IMR-90 (cell line): ENCODE measurements at regions of chr19 and their contacts with region 1.

Region 1: DNA sequence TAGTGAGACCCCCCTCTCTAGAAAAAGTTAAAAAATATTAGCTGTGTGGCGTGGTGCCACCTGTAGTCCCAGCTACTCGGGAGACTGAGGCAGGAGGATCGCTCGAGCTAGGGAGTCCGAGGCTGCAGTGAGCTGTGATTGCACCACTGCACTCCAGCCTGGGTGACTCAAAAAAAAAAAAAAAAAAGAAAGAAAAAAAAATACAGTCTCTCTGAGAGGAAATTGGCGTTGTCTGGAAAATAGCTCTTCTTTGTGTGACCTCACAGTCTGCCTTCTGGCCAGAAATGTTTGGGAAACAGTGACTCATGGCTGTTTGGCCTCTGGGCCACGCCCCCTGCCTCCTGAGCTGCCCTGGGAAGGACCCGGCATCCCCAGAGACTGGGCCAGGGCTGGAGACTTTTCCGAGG is 10.7 kb downstream of the MARCHF2 start:
- DNase-seq: peak; percentile 97
- ATAC-seq: peak; percentile 100
- H3K4me3 ChIP-seq: no peak overlapping the region
- H3K27ac ChIP-seq: peak overlapping the region; percentile 23; the same call in 1 of the 2 replicates
- H3K4me1 ChIP-seq: peaks cover 4% of the 10 kb centered on the region
- H3K27me3 ChIP-seq: no peaks in the 10 kb centered on the region
- CTCF ChIP-seq: no peak
- POLR2A ChIP-seq: no peak
- RAD21 ChIP-seq: no peak

Region 2: DNA sequence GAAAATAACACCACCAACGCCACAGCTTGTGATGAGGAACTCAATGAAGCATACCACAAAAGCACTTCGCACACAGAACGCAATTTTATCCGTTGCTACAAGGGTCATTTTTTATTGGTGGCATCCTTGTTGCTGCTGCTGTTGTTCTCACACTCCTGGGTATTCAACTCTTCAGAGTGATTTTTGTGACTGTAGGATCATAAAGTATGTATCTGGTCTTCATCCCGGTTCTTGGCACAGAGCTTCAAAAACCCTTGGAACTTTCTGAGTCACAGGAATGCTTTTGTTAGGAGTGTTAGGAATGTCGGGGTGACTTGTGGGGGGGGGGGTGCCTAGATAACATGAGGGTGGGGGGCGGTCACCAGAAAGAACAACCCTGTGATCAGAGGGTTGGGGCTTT is 1245.9 kb before region 1 on chr19:
- CTCF ChIA-PET with region 1: no interaction called
- POLR2A ChIA-PET with region 1: no interaction called
- dilution Hi-C with region 1: no loop called
- in situ Hi-C with region 1: no loop called
- intact Hi-C with region 1: no loop called
- DNase-seq: peak; percentile 50
- ATAC-seq: peak; percentile 29; the same call in 1 of the 2 replicates
- H3K4me3 ChIP-seq: no peak overlapping the region
- H3K27ac ChIP-seq: no peak overlapping the region
- H3K4me1 ChIP-seq: peaks cover 9% of the 10 kb centered on the region
- H3K27me3 ChIP-seq: no peaks in the 10 kb centered on the region
- CTCF ChIP-seq: no peak
- POLR2A ChIP-seq: no peak
- RAD21 ChIP-seq: no peak

Region 3: DNA sequence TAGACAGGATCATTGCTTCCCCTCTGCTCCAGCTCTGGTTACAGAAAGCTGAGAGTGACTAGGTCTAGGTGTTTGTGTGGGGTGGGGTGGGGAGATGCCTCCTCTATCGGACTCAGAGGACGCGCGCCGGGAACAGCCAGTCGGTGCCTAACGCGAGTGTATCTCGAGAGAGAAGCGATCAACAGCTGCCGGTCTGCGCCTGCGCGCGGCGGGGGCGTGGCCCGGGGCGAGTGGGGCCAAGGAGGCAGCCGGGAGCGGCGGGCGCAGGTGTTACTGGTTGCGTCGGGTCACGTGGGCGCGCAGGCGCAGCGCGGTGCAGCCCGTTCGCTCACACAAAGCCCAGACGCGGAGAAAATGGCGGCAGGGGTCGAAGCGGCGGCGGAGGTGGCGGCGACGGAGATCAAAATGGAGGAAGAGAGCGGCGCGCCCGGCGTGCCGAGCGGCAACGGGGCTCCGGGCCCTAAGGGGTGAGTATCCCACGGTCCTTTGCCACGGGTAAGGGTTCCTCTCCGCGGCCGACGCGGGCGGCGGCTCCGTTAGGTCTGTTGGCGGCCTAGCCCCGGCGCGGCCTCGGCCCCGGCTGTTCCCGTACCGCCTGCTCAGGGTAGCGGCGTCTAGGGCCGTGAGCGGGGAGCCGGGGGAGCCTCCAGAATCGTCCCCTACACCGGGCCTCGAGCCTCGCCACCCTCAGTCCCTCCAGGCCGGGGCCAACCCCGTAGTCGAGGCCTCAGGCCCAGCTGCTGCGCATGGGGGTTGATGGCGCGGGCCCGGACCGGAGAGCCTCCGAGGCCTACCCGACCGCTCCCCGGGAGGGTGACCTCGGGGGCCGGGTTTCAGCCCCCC is 21.0 kb after region 1 on chr19 and contains the start of gene HNRNPM:
- CTCF ChIA-PET with region 1: interaction called, 3 read pairs
- POLR2A ChIA-PET with region 1: no interaction called
- dilution Hi-C with region 1: no loop called
- in situ Hi-C with region 1: no loop called
- intact Hi-C with region 1: loop called (anchors 2 kb)
- DNase-seq: peak; percentile 95
- ATAC-seq: peak; percentile 95
- H3K4me3 ChIP-seq: peak within 1 kb of the TSS; percentile 83
- H3K27ac ChIP-seq: peak within 1 kb of the TSS; percentile 88
- H3K4me1 ChIP-seq: peaks cover 5% of the 10 kb centered on the region
- H3K27me3 ChIP-seq: no peaks in the 10 kb centered on the region
- CTCF ChIP-seq: no peak
- POLR2A ChIP-seq: peak; percentile 95
- RAD21 ChIP-seq: no peak
- total RNA-seq, gene HNRNPM: 75.6 and 90.5 TPM in 2 replicates

Region 4: GRCh38 chr19:8459520-8460259 is 35.9 kb after region 1 on chr19:
- CTCF ChIA-PET with region 1: no interaction called
- POLR2A ChIA-PET with region 1: interaction called, 10 read pairs
- dilution Hi-C with region 1: no loop called
- in situ Hi-C with region 1: no loop called
- intact Hi-C with region 1: no loop called
- DNase-seq: peak; percentile 86
- ATAC-seq: peak; percentile 84
- H3K4me3 ChIP-seq: no peak overlapping the region
- H3K27ac ChIP-seq: peak overlapping the region; percentile 87
- H3K4me1 ChIP-seq: peaks cover 33% of the 10 kb centered on the region
- H3K27me3 ChIP-seq: no peaks in the 10 kb centered on the region
- CTCF ChIP-seq: no peak
- POLR2A ChIP-seq: no peak
- RAD21 ChIP-seq: no peak